Left cardiac atrium (tissue), 4 donors: ENCODE measurements at regions of chr9 and their contacts with region 1.

Region 1: GRCh38 chr9:135907431-135908092 is at the start of gene CAMSAP1:
- DNase-seq: peak; percentile 93
- ATAC-seq: peak; percentile 97 to 98
- total RNA-seq, gene CAMSAP1: 17.2 to 17.6 TPM

Region 2: DNA sequence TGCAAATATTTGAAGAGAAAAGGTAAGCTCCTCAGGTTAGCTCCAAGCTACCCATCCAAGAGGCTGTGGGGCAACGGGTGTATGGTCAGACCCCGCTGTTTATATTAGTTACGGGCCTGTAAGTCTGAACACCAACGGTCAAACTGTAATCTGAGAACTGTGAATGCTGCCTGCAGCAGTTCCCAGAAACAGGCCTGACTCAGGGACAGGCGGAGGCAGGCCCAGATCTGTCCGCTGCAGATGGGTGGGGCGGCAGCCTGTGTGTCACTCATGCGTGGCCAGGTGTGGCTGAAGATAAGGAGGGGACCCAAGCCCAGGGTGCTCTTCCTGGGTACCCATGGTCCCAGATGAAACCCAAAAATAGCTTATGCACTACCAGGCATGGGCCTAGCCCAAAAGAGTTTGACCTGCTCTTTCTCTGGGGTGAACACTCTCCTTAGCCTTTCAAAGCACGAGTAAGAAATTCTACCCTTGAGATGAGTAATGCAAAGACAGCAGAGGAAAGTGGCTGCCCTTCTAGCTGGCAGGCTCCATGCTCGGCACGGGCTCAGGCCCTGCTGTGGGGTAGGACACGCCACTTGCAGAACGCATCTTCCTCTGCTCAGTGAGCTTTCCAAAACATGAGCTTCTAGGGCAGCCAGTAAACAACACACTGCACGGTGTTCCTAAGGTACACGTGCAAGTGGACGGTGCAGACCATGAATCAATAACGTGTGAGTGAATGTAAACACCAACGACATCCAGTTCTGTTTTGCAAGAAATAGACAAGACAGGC is 44.5 kb after region 1 on chr9:
- intact Hi-C with region 1: loop called (anchors 5 to 10 kb)
- DNase-seq: no peak
- ATAC-seq: no peak

Region 3: DNA sequence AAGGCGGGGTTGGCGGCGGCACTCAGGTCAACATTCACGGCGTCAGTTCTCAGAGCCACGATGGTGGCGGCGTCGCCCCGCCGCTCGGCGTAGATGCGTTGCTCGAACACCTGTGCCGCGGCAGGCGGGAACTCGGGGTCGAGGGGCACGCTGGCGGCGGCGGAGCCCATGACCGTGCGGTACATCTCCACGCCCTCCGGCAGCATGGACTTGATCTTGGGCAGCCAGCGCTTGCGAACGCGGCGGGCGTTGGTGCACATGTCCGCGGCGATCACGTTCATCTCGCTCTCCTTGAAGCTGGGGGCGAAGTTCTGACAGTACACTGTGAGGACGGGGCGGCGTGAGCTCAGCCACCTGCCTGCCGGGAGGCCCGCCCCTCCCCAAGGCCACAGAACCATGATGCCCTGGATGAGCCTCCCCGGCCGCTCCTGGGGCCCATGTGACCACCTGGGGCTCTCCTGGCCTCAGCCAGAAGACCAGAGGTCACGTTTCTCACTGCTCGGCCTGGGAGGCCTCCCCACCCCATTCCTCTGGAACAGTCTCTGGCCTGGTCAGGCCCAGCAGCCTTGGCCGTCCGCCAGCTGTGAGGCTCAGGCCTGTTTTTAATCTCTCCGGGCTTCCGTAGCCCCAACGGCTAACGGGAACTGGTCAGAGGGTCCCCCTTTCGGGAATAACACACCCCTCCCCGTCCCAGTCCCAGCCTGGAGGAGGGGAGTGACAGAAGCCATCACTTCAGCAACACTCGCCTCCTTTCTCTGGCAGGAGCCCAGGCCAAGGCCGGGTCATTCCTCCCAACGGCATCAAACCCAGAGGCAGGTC is 104.3 kb after region 1 on chr9:
- intact Hi-C with region 1: no loop called
- DNase-seq: peak; percentile 94
- ATAC-seq: peak; percentile 72 to 74